Common myeloid progenitor, CD34-positive (primary cell): ENCODE measurements at regions of chr3 and their contacts with region 1.

Region 1: DNA sequence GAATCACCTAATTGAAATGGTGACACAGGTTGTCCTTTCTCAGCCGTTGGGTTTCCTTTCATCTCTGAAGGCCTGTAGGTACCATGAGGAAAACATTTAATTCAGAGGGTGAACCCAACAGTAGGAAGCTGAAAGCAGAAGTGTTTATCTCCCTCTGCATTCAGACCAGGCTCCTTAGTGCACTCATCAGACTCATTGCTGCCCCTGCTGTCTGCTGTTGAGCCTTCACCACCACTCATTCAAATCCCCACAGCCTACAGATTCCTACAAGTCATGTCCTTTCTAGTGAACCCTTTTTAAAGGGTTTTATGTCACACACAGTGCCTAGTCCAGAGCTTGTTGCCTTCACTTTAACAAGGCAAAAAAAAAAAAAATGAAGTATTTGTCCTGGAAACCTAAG is 13.4 kb downstream of the WDR48 start:
- DNase-seq: peak; percentile 70 to 87 (median 85)
- H3K4me3 ChIP-seq: no peak overlapping the region
- H3K27ac ChIP-seq: no peak overlapping the region
- H3K4me1 ChIP-seq: peaks cover 0 to 8% (median 3%) of the 10 kb centered on the region in 4 experiments
- H3K27me3 ChIP-seq: no peaks in the 10 kb centered on the region

Region 2: DNA sequence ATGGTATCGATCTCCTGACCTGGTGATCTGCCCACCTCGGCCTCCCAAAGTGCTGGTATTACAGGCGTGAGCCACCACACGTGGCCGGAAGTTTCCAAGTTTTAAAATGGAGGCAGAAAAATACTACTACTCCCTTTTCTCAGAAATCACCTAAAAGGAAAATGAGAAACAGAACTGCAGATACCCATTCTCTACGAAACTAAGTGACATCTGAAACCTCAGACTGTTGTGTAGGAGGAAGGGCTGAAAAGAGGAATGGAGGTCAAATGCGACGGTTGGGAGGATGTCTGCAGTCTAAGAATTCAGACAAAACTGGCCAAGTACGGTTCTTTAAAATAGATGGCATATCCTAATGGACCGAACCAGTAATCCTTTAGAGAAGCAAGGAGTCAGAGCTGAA is 10.7 kb after region 1 on chr3:
- CTCF ChIA-PET with region 1: interaction called, 12 read pairs
- POLR2A ChIA-PET with region 1: no interaction called
- DNase-seq: no peak
- H3K4me3 ChIP-seq: no peak overlapping the region
- H3K27ac ChIP-seq: no peak overlapping the region
- H3K4me1 ChIP-seq: peaks cover 0 to 3% (median 0%) of the 10 kb centered on the region in 4 experiments
- H3K27me3 ChIP-seq: no peaks in the 10 kb centered on the region